ENCODE measurements at regions of chr19 and their contacts with region 1.

Region 1: GRCh38 chr19:40549007-40549708 is 27.5 kb upstream of the SHKBP1 start:
- DNase-seq: peak; percentile 87
- ATAC-seq: peak; percentile 99
- H3K4me3 Mint-ChIP-seq: no peak overlapping the region
- H3K27ac Mint-ChIP-seq: no peak overlapping the region
- H3K4me1 Mint-ChIP-seq: peaks cover 7% of the 10 kb centered on the region
- H3K27me3 Mint-ChIP-seq: peaks cover 34% of the 10 kb centered on the region
- CTCF ChIP-seq: peak; percentile 40

Region 2: GRCh38 chr19:40570313-40571004 is 21.3 kb after region 1 on chr19:
- CTCF ChIA-PET with region 1: interaction called, 17 read pairs
- POLR2A ChIA-PET with region 1: interaction called, 4 read pairs
- intact Hi-C with region 1: no loop called
- DNase-seq: peak; percentile 98
- ATAC-seq: peak; percentile 96
- H3K4me3 Mint-ChIP-seq: peak overlapping the region; percentile 48
- H3K27ac Mint-ChIP-seq: peak overlapping the region; percentile 51
- H3K4me1 Mint-ChIP-seq: peaks cover 10% of the 10 kb centered on the region
- H3K27me3 Mint-ChIP-seq: peaks cover 28% of the 10 kb centered on the region
- CTCF ChIP-seq: no peak